Left cardiac atrium (tissue), 4 donors: ENCODE measurements at regions of chr17 and their contacts with region 1.

Region 1: GRCh38 chr17:75749545-75750389 is 15.2 kb downstream of the GALK1 start:
- DNase-seq: peak; percentile 91
- ATAC-seq: peak; percentile 65 to 79

Region 2: DNA sequence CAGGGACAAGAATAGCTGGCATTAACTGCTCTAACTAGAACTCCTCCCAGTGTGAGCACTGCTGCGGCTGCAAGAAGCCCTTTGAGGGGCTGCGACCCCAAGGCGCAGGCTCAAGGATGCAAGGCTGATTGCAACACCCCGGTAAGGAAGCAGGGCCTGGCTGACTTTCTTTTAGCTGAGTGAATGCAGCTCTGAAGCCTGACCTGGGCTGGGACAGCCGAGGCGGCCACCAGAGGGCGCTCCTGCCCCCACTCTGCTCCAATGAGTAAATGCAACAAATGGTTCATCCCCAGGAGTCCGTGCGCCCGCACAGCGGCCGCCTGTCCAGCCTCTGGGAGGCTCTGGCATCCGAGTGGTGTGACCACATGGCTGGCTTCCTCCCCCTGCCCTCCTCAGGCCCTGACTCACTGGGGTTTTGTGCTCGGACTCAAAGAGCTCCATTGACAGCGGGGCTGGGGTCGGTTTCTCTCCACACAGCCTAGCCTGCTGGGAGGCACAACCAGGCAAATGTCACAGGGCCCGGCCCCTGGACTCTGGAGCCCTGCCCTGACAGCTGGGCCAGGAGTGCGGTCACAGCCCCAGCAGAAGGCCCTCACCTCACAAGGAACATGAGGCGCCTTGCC is 116.8 kb before region 1 on chr17 and contains the start of gene SMIM5:
- intact Hi-C with region 1: loop called (anchors 2 to 5 kb)
- DNase-seq: peak; percentile 89
- ATAC-seq: peak; percentile 81 to 82
- total RNA-seq, gene SMIM5: 8.6 to 11.4 TPM

Region 3: DNA sequence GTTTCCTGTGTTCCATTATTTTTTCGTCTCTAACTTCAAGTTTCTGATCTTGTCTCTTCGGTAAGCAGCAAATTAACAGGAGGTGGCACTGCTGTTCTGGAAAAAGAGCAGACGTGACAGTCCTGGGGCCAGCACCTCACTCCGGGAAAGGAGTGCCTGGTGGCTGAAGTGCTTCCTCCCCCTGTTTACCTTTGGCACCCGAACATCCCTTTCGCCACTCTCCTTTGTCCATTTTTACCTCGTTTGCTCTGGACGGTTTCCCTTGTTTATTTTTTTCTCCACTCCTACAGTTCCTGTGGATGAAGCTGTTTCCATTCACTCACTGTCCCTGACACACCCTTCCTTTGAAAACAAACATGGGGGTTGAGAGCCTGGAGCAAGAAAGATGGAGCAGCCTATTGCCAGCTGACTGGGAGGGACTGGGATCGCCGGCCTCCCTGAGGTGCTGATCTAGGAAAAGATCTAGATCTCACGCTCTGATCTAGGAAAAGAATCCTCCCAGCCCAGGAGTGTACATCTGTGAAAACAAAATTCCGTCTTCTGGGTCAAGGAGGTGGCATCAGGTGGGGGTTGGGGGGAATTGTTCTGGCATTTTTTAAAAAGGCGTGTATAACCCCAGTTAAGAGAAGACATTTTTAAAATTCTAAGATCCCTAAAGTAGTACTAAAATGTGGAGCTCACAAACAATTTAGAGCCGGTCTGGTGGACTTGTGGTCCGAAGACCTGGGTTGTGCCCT is 69.9 kb before region 1 on chr17:
- intact Hi-C with region 1: loop called (anchors 1 to 5 kb)
- DNase-seq: peak; percentile 71
- ATAC-seq: peak; percentile 66 to 67

Region 4: GRCh38 chr17:75707131-75707571 is 42.6 kb before region 1 on chr17:
- intact Hi-C with region 1: no loop called
- DNase-seq: peak; percentile 84
- ATAC-seq: peak; percentile 67 to 71